ENCODE measurements at regions of chr6 and their contacts with region 1.

Region 1: GRCh38 chr6:118651282-118652050 is at the start of gene CEP85L:
- DNase-seq: peak; percentile 92
- ATAC-seq: peak; percentile 91
- H3K4me3 ChIP-seq: peak within 1 kb of the TSS; percentile 59 to 89 (median 73)
- H3K4me3 Mint-ChIP-seq: peak within 1 kb of the TSS; percentile 98
- H3K27ac ChIP-seq: peak within 1 kb of the TSS; percentile 68 to 86
- H3K27ac Mint-ChIP-seq: peak within 1 kb of the TSS; percentile 96
- H3K4me1 ChIP-seq: peaks cover 12 to 13% of the 10 kb centered on the region in 2 donors
- H3K4me1 Mint-ChIP-seq: peaks cover 24% of the 10 kb centered on the region
- H3K27me3 ChIP-seq: no peaks in the 10 kb centered on the region
- H3K27me3 Mint-ChIP-seq: no peaks in the 10 kb centered on the region
- CTCF ChIP-seq: no peak
- total RNA-seq, gene CEP85L: 32.0 and 32.1 TPM in 2 replicates

Region 2: GRCh38 chr6:117674991-117675657 is 976.3 kb before region 1 on chr6 and contains the start of gene NUS1:
- CTCF ChIA-PET with region 1: no interaction called
- POLR2A ChIA-PET with region 1: no interaction called
- intact Hi-C with region 1: loop called (anchors 2 kb)
- DNase-seq: peak; percentile 98
- ATAC-seq: peak; percentile 98
- H3K4me3 ChIP-seq: peak within 1 kb of the TSS; percentile 55 to 81 (median 65)
- H3K4me3 Mint-ChIP-seq: peak within 1 kb of the TSS; percentile 90
- H3K27ac ChIP-seq: peak within 1 kb of the TSS; percentile 55 to 75
- H3K27ac Mint-ChIP-seq: peak within 1 kb of the TSS; percentile 94
- H3K4me1 ChIP-seq: peaks cover 28 to 30% of the 10 kb centered on the region in 2 donors
- H3K4me1 Mint-ChIP-seq: peaks cover 42% of the 10 kb centered on the region
- H3K27me3 ChIP-seq: no peaks in the 10 kb centered on the region
- H3K27me3 Mint-ChIP-seq: no peaks in the 10 kb centered on the region
- CTCF ChIP-seq: peak; percentile 75
- total RNA-seq, gene NUS1: 22.1 and 23.1 TPM in 2 replicates

Region 3: DNA sequence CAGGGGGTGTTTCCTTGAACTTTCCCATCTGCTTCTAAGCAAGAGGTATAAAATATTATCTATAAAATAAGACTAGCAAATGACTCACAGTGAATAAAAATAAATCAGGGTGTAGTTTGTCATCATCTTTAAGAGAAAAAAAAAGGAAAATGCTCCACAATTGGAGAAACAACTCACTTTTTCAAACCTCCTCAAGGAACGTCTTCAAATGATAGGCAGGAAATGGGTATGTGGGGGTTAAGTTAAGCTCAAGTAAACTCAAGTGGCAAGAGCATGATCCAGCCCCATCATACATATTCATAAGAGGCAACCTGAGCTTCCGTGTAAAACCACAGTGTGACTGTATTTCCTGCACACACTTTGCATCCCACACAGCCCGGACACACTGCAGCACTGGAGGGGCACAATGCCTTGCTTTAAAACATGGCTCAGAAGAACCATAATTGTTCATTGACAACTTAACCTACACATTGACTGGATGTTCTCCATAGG is 58.4 kb after region 1 on chr6:
- CTCF ChIA-PET with region 1: interaction called, 13 read pairs
- POLR2A ChIA-PET with region 1: interaction called, 19 read pairs
- intact Hi-C with region 1: loop called (anchors 1 kb)
- DNase-seq: peak; percentile 86
- ATAC-seq: peak; percentile 93
- H3K4me3 ChIP-seq: peak overlapping the region; percentile 59 to 93 (median 83)
- H3K4me3 Mint-ChIP-seq: peak overlapping the region; percentile 97
- H3K27ac ChIP-seq: peak overlapping the region; percentile 62 to 86
- H3K27ac Mint-ChIP-seq: peak overlapping the region; percentile 95
- H3K4me1 ChIP-seq: peaks cover 54 to 58% of the 10 kb centered on the region in 2 donors
- H3K4me1 Mint-ChIP-seq: peaks cover 68% of the 10 kb centered on the region
- H3K27me3 ChIP-seq: no peaks in the 10 kb centered on the region
- H3K27me3 Mint-ChIP-seq: no peaks in the 10 kb centered on the region
- CTCF ChIP-seq: no peak

Region 4: GRCh38 chr6:118725944-118726343 is 74.5 kb after region 1 on chr6:
- CTCF ChIA-PET with region 1: no interaction called
- POLR2A ChIA-PET with region 1: no interaction called
- intact Hi-C with region 1: no loop called
- DNase-seq: no peak
- ATAC-seq: peak; percentile 34
- H3K4me3 ChIP-seq: no peak overlapping the region
- H3K4me3 Mint-ChIP-seq: no peak overlapping the region
- H3K27ac ChIP-seq: no peak overlapping the region
- H3K27ac Mint-ChIP-seq: peak overlapping the region; percentile 44
- H3K4me1 ChIP-seq: peaks cover 25 to 26% of the 10 kb centered on the region in 2 donors
- H3K4me1 Mint-ChIP-seq: peaks cover 41% of the 10 kb centered on the region
- H3K27me3 ChIP-seq: no peaks in the 10 kb centered on the region
- H3K27me3 Mint-ChIP-seq: no peaks in the 10 kb centered on the region
- CTCF ChIP-seq: no peak

Region 5: GRCh38 chr6:118776607-118777549 is 125.4 kb after region 1 on chr6:
- CTCF ChIA-PET with region 1: interaction called, 9 read pairs
- POLR2A ChIA-PET with region 1: no interaction called
- intact Hi-C with region 1: loop called (anchors 1 kb)
- DNase-seq: peak; percentile 75
- ATAC-seq: peak; percentile 68
- H3K4me3 ChIP-seq: no peak overlapping the region
- H3K4me3 Mint-ChIP-seq: no peak overlapping the region
- H3K27ac ChIP-seq: no peak overlapping the region
- H3K27ac Mint-ChIP-seq: no peak overlapping the region
- H3K4me1 ChIP-seq: no peaks in the 10 kb centered on the region
- H3K4me1 Mint-ChIP-seq: peaks cover 6% of the 10 kb centered on the region
- H3K27me3 ChIP-seq: no peaks in the 10 kb centered on the region
- H3K27me3 Mint-ChIP-seq: peaks cover 4% of the 10 kb centered on the region
- CTCF ChIP-seq: peak; percentile 89

Region 6: DNA sequence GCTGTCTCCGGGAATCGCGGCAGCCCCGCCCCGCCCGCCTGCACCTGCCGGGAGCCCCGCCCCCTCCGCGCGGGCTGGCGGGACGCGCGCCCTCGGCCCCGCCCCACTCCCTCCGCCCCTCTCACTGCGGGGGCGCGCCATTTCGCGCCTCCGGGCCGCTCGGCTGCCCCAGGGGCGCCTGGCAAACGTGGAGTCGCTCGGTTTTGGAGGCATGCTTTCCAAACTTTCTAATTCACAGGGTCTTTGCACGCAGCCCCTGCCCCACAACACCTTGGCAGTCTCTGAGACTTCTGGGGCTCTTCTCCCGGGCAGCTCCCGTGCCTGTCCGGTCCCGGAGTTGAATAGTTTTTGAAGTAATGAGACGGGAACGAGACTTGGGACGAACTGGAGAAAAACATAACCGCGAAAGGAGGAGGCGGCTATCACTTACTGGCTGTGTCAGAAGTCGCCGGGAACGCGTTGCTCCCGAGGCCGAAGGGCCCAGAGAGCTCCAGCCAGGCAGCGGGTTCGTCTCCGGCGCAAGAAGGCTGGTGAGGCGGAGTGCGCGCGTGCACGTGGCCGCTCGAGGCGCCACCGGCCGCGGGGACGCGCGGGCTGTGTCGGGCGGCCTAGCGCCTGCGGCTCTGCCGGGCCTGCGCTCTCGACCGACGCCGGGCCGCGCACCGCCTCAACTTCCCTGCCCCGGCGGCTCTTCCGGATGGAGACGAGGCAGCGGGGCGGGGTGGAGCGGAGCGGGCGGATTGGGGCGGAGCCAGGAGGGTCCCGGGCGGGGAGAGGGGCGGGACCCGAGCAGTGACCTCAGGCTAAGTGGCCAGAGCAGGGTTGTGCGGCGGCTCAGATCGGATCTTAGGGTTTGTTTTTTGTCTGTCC is 283.2 kb after region 1 on chr6 and contains the start of gene MCM9:
- CTCF ChIA-PET with region 1: no interaction called
- POLR2A ChIA-PET with region 1: interaction called, 4 read pairs
- intact Hi-C with region 1: loop called (anchors 1 kb)
- DNase-seq: peak; percentile 93
- ATAC-seq: peak; percentile 89
- H3K4me3 ChIP-seq: peak within 1 kb of the TSS; percentile 91 to 99 (median 94)
- H3K4me3 Mint-ChIP-seq: peak within 1 kb of the TSS; percentile 92
- H3K27ac ChIP-seq: peak within 1 kb of the TSS; percentile 83 to 90
- H3K27ac Mint-ChIP-seq: peak within 1 kb of the TSS; percentile 92
- H3K4me1 ChIP-seq: peaks cover 10 to 18% of the 10 kb centered on the region in 2 donors
- H3K4me1 Mint-ChIP-seq: peaks cover 35% of the 10 kb centered on the region
- H3K27me3 ChIP-seq: no peaks in the 10 kb centered on the region
- H3K27me3 Mint-ChIP-seq: no peaks in the 10 kb centered on the region
- CTCF ChIP-seq: no peak
- total RNA-seq, gene MCM9: 51.0 and 54.5 TPM in 2 replicates

Region 7: DNA sequence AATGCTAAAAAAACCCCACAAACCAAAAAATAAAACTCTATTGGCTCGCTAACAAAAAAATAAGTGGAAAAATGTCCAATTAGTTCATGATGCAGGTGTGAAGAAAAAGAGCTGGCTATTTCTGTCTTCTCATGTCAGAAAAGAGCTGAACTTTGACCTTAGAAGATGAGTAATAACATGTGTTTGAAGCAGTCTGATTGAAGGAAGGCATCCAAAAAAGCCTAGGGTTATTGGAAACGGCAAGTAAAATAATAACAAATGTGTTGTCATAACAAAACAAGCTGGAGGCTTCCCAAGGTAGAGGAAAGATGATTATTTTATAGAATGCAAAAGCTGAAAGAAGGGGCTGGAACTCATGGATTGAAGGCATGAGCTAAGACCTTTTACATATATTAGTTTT is 521.4 kb after region 1 on chr6:
- CTCF ChIA-PET with region 1: no interaction called
- POLR2A ChIA-PET with region 1: no interaction called
- intact Hi-C with region 1: no loop called
- DNase-seq: no peak
- ATAC-seq: no peak
- H3K4me3 ChIP-seq: no peak overlapping the region
- H3K4me3 Mint-ChIP-seq: no peak overlapping the region
- H3K27ac ChIP-seq: no peak overlapping the region
- H3K27ac Mint-ChIP-seq: no peak overlapping the region
- H3K4me1 ChIP-seq: no peaks in the 10 kb centered on the region
- H3K4me1 Mint-ChIP-seq: no peaks in the 10 kb centered on the region
- H3K27me3 ChIP-seq: no peaks in the 10 kb centered on the region
- H3K27me3 Mint-ChIP-seq: no peaks in the 10 kb centered on the region
- CTCF ChIP-seq: no peak

Region 8: GRCh38 chr6:119349323-119350042 is 698.0 kb after region 1 on chr6 and contains the start of gene MAN1A1:
- CTCF ChIA-PET with region 1: no interaction called
- POLR2A ChIA-PET with region 1: no interaction called
- intact Hi-C with region 1: loop called (anchors 5 kb)
- DNase-seq: peak; percentile 94
- ATAC-seq: peak; percentile 83
- H3K4me3 ChIP-seq: peak within 1 kb of the TSS; percentile 73 to 95 (median 88)
- H3K4me3 Mint-ChIP-seq: peak within 1 kb of the TSS; percentile 90
- H3K27ac ChIP-seq: peak within 1 kb of the TSS; percentile 85 to 94
- H3K27ac Mint-ChIP-seq: peak within 1 kb of the TSS; percentile 80
- H3K4me1 ChIP-seq: peaks cover 35 to 58% of the 10 kb centered on the region in 2 donors
- H3K4me1 Mint-ChIP-seq: peaks cover 55% of the 10 kb centered on the region
- H3K27me3 ChIP-seq: no peaks in the 10 kb centered on the region
- H3K27me3 Mint-ChIP-seq: no peaks in the 10 kb centered on the region
- CTCF ChIP-seq: no peak
- total RNA-seq, gene MAN1A1: 31.5 and 31.7 TPM in 2 replicates

Measured in B cell (primary cell).